ENCODE measurements at regions of chr18 and their contacts with region 1.

Region 1: GRCh38 chr18:34976899-34977837 is 64.0 kb upstream of the MAPRE2 start:
- DNase-seq: peak; percentile 88
- ATAC-seq: peak; percentile 78
- H3K4me3 Mint-ChIP-seq: peak overlapping the region; percentile 83
- H3K27ac Mint-ChIP-seq: no peak overlapping the region
- H3K4me1 Mint-ChIP-seq: peaks cover 30% of the 10 kb centered on the region
- H3K27me3 Mint-ChIP-seq: no peaks in the 10 kb centered on the region
- CTCF ChIP-seq: no peak

Region 2: GRCh38 chr18:35040988-35041814 is 64.0 kb after region 1 on chr18 and contains the start of gene MAPRE2:
- CTCF ChIA-PET with region 1: no interaction called
- POLR2A ChIA-PET with region 1: interaction called, 3 read pairs
- intact Hi-C with region 1: loop called (anchors 5 kb)
- DNase-seq: peak; percentile 100
- ATAC-seq: peak; percentile 79
- H3K4me3 Mint-ChIP-seq: peak within 1 kb of the TSS; percentile 85
- H3K27ac Mint-ChIP-seq: peak within 1 kb of the TSS; percentile 98
- H3K4me1 Mint-ChIP-seq: peaks cover 54% of the 10 kb centered on the region
- H3K27me3 Mint-ChIP-seq: no peaks in the 10 kb centered on the region
- CTCF ChIP-seq: peak; percentile 22
- total RNA-seq, gene MAPRE2: 70.7 to 72.7 TPM